Activated CD8-positive, alpha-beta memory T cell treated with anti-CD3 and anti-CD28 coated beads, Interleukin-2, amount 10 ng/mL, durations not matched to agents 7 days and 5 days (primary cell): ENCODE measurements at regions of chr2 and their contacts with region 1.

Region 1: DNA sequence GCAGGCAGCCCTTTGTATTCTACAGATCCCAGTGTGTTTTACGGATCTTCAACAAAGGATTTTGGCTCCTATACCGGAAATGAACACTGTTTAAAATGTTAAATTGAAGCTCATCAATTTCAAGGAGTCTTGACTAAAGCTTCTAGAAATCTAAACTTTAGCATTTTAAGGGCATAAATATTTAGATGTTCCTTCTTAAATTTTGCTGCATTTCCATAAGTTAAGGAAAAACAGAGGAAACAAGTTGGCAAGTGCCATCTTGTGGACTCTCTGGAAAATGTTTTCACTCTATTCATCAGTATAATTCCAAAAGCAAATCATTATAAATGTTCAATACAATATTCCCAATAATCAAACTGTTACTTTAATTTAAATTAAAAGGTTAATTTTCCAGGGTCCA is 19.6 kb downstream of the CHN1 start:
- DNase-seq: no peak
- ATAC-seq: no peak
- H3K4me3 Mint-ChIP-seq: no peak overlapping the region
- H3K27ac Mint-ChIP-seq: no peak overlapping the region
- H3K4me1 Mint-ChIP-seq: peaks cover 3% of the 10 kb centered on the region
- H3K27me3 Mint-ChIP-seq: peaks cover 6% of the 10 kb centered on the region

Region 2: GRCh38 chr2:174771631-174772471 is 213.8 kb before region 1 on chr2:
- CTCF ChIA-PET with region 1: interaction called, 20 read pairs
- DNase-seq: peak; percentile 67
- ATAC-seq: peak; percentile 84
- H3K4me3 Mint-ChIP-seq: no peak overlapping the region
- H3K27ac Mint-ChIP-seq: no peak overlapping the region
- H3K4me1 Mint-ChIP-seq: peaks cover 7% of the 10 kb centered on the region
- H3K27me3 Mint-ChIP-seq: no peaks in the 10 kb centered on the region

Region 3: DNA sequence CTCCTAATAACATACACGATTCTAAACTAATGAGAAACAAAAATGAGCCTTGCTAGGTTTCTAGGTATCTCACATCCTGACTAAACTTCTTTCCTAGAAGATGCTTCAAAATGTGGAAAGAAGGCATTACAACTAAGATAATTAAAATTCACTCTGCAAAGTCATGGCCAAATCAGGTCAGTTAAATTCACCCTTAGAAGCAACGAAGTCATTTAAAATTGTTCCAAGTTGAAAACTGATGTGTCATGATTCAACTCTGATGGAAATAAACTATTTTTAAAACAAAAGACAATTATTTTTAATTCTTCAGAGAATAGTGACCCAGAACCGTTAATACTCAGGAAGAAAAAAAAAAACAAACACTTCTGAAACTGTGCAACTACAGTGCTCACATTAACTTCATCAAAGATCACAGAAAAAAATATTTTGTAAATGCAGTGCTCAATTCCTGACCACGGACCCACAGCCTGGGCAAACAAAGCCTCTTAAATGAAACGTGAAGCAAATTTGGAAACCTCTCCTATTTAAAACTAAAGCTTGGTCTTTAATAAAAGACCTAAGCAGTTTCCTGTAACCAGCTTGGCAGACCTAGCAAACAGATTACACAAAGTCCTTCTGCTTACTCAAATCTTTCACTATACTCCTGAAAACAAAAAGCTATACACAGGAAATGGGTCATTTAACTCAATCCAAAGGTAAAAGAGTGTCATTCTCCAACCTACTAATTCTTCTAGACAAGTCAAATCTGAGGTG is 19.5 kb before region 1 on chr2:
- CTCF ChIA-PET with region 1: no interaction called
- DNase-seq: no peak
- ATAC-seq: peak; percentile 36
- H3K4me3 Mint-ChIP-seq: no peak overlapping the region
- H3K27ac Mint-ChIP-seq: no peak overlapping the region
- H3K4me1 Mint-ChIP-seq: peaks cover 12% of the 10 kb centered on the region
- H3K27me3 Mint-ChIP-seq: peaks cover 9% of the 10 kb centered on the region